Psoas muscle (tissue), 8 donors: ENCODE measurements at regions of chr2 and their contacts with region 1.

Region 1: GRCh38 chr2:219642465-219643080 is 15.1 kb downstream of the SLC4A3 start:
- DNase-seq: peak; percentile 97 to 98
- ATAC-seq: peak; percentile 88 to 92 (median 90)
- H3K4me3 ChIP-seq: no peak overlapping the region
- H3K27ac ChIP-seq: no peak overlapping the region
- H3K4me1 ChIP-seq: peaks cover 16% of the 10 kb centered on the region
- H3K27me3 ChIP-seq: no peaks in the 10 kb centered on the region
- CTCF ChIP-seq: peak; percentile 98

Region 2: GRCh38 chr2:219543601-219544358 is 98.8 kb before region 1 on chr2 and contains the starts of genes CHPF and TMEM198:
- intact Hi-C with region 1: loop called (anchors 2 kb)
- DNase-seq: peak; percentile 98 to 99
- ATAC-seq: peak; percentile 91 to 93 (median 92)
- H3K4me3 ChIP-seq: peak within 1 kb of the TSS; percentile 79
- H3K27ac ChIP-seq: peak within 1 kb of the TSS; percentile 94
- H3K4me1 ChIP-seq: peaks cover 23% of the 10 kb centered on the region
- H3K27me3 ChIP-seq: no peaks in the 10 kb centered on the region
- CTCF ChIP-seq: no peak
- total RNA-seq, gene CHPF: 11.9 to 14.2 (median 13.1) TPM
- total RNA-seq, gene TMEM198: 0.88 to 3.1 (median 2.0) TPM

Region 3: GRCh38 chr2:219569050-219569449 is 73.5 kb before region 1 on chr2:
- intact Hi-C with region 1: loop called in 1 of 2 experiments (anchors 5 kb)
- DNase-seq: no peak
- ATAC-seq: no peak
- H3K4me3 ChIP-seq: no peak overlapping the region
- H3K27ac ChIP-seq: no peak overlapping the region
- H3K4me1 ChIP-seq: peaks cover 9% of the 10 kb centered on the region
- H3K27me3 ChIP-seq: no peaks in the 10 kb centered on the region
- CTCF ChIP-seq: no peak

Region 4: GRCh38 chr2:219597552-219598307 is 44.8 kb before region 1 on chr2 and contains the start of gene STK11IP:
- intact Hi-C with region 1: loop called (anchors 1 to 5 kb)
- DNase-seq: peak; percentile 97 to 98
- ATAC-seq: peak; percentile 98 to 99 (median 98)
- H3K4me3 ChIP-seq: peak within 1 kb of the TSS; percentile 82
- H3K27ac ChIP-seq: peak within 1 kb of the TSS; percentile 94
- H3K4me1 ChIP-seq: no peaks in the 10 kb centered on the region
- H3K27me3 ChIP-seq: no peaks in the 10 kb centered on the region
- CTCF ChIP-seq: no peak
- total RNA-seq, gene STK11IP: 5.5 to 12.8 (median 10.3) TPM

Region 5: GRCh38 chr2:219603771-219604170 is 38.8 kb before region 1 on chr2:
- intact Hi-C with region 1: loop called in 1 of 2 experiments (anchors 5 kb)
- DNase-seq: no peak
- ATAC-seq: no peak
- H3K4me3 ChIP-seq: no peak overlapping the region
- H3K27ac ChIP-seq: no peak overlapping the region
- H3K4me1 ChIP-seq: no peaks in the 10 kb centered on the region
- H3K27me3 ChIP-seq: no peaks in the 10 kb centered on the region
- CTCF ChIP-seq: no peak

Region 6: DNA sequence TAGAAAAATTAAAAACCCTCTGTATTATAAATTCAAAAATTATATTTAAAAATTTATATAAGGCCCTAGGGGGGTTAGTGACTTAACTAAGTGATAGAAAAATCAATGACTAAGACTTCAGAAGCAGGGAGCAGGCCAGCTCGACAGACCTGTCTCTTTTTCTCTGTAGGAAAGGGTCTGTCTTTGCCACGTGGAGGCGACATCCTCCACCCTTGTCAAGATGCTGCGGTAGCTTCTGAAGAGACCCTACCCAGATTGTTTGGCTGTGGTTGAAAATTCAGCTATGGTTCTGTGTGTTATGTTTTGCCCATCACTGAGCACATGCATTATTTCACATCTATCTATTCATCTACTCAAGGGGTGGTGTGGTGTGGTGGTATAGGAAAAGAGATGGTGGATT is 23.3 kb before region 1 on chr2:
- intact Hi-C with region 1: no loop called
- DNase-seq: no peak
- ATAC-seq: no peak
- H3K4me3 ChIP-seq: no peak overlapping the region
- H3K27ac ChIP-seq: no peak overlapping the region
- H3K4me1 ChIP-seq: no peaks in the 10 kb centered on the region
- H3K27me3 ChIP-seq: no peaks in the 10 kb centered on the region
- CTCF ChIP-seq: no peak

Region 7: GRCh38 chr2:219689676-219690628 is 47.4 kb after region 1 on chr2:
- intact Hi-C with region 1: loop called (anchors 5 kb)
- DNase-seq: no peak
- ATAC-seq: peak; percentile 62 to 73 (median 68)
- H3K4me3 ChIP-seq: no peak overlapping the region
- H3K27ac ChIP-seq: no peak overlapping the region
- H3K4me1 ChIP-seq: peaks cover 9% of the 10 kb centered on the region
- H3K27me3 ChIP-seq: no peaks in the 10 kb centered on the region
- CTCF ChIP-seq: peak; percentile 83